A673 (cell line): ENCODE measurements at regions of chr1 and their contacts with region 1.

Region 1: DNA sequence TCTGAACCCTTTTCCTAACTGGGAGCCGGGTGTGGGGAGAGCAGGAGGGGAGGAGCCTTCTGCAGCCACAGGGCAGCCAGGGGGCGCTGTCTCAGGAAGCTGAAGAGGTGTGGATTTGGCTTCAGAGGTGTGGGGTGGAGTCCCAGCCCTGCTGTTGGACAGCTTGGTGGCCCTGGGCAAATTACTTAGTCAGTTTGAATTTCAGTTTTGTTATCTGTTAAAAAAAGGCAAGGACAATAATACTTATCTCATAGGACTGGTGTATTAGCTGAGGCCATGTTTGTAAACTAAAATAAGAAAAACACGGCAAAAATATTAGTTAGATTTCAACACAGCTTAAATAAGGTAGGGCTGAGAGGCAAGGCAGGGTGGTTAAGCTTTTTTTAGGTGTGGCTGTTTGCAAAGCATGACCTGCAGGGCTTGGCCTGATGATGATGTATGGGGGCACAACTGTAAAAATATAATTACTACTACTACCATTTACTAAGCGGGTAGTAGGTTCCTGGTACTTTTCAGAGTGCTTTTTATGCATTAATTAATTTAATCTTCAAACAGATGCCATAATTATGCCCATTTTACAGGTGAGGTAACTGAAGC is 111.8 kb downstream of the PLXNA2 start:
- DNase-seq: peak; percentile 73
- H3K4me3 ChIP-seq: no peak overlapping the region
- H3K27ac ChIP-seq: no peak overlapping the region
- H3K4me1 ChIP-seq: no peaks in the 10 kb centered on the region
- H3K27me3 ChIP-seq: no peaks in the 10 kb centered on the region
- CTCF ChIP-seq: peak; percentile 96

Region 2: GRCh38 chr1:207863893-207864535 is 268.4 kb before region 1 on chr1:
- CTCF ChIA-PET with region 1: no interaction called
- POLR2A ChIA-PET with region 1: interaction called, 10 read pairs
- intact Hi-C with region 1: no loop called
- DNase-seq: no peak
- H3K4me3 ChIP-seq: no peak overlapping the region
- H3K27ac ChIP-seq: no peak overlapping the region
- H3K4me1 ChIP-seq: no peaks in the 10 kb centered on the region
- H3K27me3 ChIP-seq: no peaks in the 10 kb centered on the region
- CTCF ChIP-seq: no peak

Region 3: DNA sequence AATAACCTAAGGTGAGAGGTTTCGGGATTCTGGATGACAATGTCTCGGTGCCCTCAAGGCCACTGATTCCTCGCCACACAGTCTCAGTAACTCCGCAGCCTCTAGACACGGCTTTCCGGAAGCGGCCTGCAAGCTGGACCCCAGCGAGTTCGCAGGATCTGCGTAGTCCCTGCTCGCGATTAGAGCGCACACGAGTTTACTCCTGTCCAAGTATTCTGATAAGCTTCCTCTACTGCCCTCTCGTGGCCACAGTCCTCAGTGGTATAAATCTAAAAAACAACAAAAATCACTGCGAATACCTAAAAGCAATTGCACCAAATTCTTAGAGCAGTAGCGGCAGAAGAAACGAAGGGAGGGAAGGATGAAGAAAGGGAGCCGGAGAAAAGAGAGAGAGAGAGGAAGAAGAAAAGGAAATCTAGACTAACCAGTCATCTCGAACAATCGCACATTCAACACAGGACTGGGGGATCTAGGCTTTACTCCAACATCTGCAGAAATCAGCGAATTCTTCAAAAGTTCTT is 112.9 kb after region 1 on chr1:
- CTCF ChIA-PET with region 1: interaction called, 6 read pairs
- POLR2A ChIA-PET with region 1: no interaction called
- intact Hi-C with region 1: loop called (anchors 2 kb)
- DNase-seq: peak; percentile 88
- H3K4me3 ChIP-seq: no peak overlapping the region
- H3K27ac ChIP-seq: no peak overlapping the region
- H3K4me1 ChIP-seq: peaks cover 4% of the 10 kb centered on the region
- H3K27me3 ChIP-seq: peaks cover 74% of the 10 kb centered on the region
- CTCF ChIP-seq: peak; percentile 91